ENCODE measurements at regions of chr20 and their contacts with region 1.

Region 1: DNA sequence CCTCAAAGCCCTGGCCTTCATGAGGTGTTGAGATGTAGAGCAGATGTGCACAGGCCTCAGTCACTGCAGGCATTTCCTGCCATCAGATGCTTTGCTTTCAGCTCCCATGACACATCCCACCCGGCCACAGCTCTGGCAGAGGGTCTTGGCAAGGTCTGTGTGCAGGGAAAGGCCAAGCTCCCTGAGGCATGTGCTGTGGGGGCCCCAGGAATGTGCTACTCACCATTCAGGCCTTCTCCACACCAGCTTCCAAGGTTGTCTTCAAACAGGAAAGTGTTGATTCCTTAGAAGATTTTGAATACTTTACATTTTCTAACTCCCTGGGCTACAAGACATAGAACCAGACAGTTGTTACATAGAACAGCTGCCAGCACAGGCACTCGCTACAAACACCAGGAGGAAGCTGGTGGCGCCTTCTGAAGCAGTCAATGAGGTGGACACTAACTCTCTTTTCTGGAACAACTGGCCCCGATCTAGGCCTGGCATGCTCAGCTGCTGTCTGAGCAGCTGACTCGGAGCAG is 27.8 kb downstream of the CASS4 start:
- DNase-seq: no peak
- ATAC-seq: peak; percentile 21
- H3K4me3 ChIP-seq: no peak overlapping the region
- H3K4me3 Mint-ChIP-seq: peak overlapping the region in 9 of 10 donors; percentile 64 to 82 (median 74)
- H3K27ac ChIP-seq: peak overlapping the region; percentile 59
- H3K27ac Mint-ChIP-seq: peak overlapping the region; percentile 81 to 95 (median 91)
- H3K4me1 ChIP-seq: peaks cover 36 to 43% of the 10 kb centered on the region in 2 donors
- H3K4me1 Mint-ChIP-seq: peaks cover 29 to 70% (median 51%) of the 10 kb centered on the region in 7 donors
- H3K27me3 ChIP-seq: no peaks in the 10 kb centered on the region
- H3K27me3 Mint-ChIP-seq: no peaks in the 10 kb centered on the region

Region 2: GRCh38 chr20:56422076-56422823 is 17.6 kb before region 1 on chr20:
- CTCF ChIA-PET with region 1: interaction called, 3 read pairs
- POLR2A ChIA-PET with region 1: interaction called, 7 read pairs
- intact Hi-C with region 1: loop called in 1 of 2 experiments (anchors 2 kb)
- DNase-seq: no peak
- ATAC-seq: no peak
- H3K4me3 ChIP-seq: no peak overlapping the region
- H3K4me3 Mint-ChIP-seq: peak overlapping the region; percentile 11 to 78 (median 58)
- H3K27ac ChIP-seq: peak overlapping the region; percentile 36
- H3K27ac Mint-ChIP-seq: peak overlapping the region; percentile 50 to 98 (median 92)
- H3K4me1 ChIP-seq: peaks cover 33 to 58% of the 10 kb centered on the region in 2 donors
- H3K4me1 Mint-ChIP-seq: peaks cover 41 to 84% (median 64%) of the 10 kb centered on the region in 7 donors
- H3K27me3 ChIP-seq: no peaks in the 10 kb centered on the region
- H3K27me3 Mint-ChIP-seq: no peaks in the 10 kb centered on the region

Region 3: DNA sequence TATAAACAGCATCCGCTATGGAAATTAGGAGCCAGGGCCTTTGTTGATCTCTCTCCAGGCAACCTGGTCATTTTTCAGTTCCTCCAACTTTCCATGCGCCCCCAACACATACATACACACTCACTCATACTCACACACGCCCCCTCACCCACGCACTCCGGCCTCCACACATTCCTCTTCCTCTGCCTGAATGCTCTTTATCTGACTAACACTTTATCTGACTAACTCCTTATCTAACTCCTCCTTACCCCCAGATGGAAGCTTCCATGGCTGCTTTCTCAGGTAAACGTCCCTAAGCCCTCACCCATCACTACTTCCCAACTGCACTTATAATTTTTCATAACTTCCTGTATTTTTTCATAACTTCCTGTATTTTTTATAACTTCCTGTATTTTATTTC is 10.3 kb before region 1 on chr20:
- CTCF ChIA-PET with region 1: interaction called, 3 read pairs
- POLR2A ChIA-PET with region 1: interaction called, 7 read pairs
- intact Hi-C with region 1: loop called in 1 of 2 experiments (anchors 1 kb)
- DNase-seq: peak in 1 of 9 donors; percentile 53
- ATAC-seq: no peak
- H3K4me3 ChIP-seq: peak overlapping the region; percentile 54
- H3K4me3 Mint-ChIP-seq: peak overlapping the region; percentile 77 to 96 (median 88)
- H3K27ac ChIP-seq: peak overlapping the region; percentile 76
- H3K27ac Mint-ChIP-seq: peak overlapping the region; percentile 84 to 99 (median 94)
- H3K4me1 ChIP-seq: peaks cover 22 to 26% of the 10 kb centered on the region in 2 donors
- H3K4me1 Mint-ChIP-seq: peaks cover 39 to 89% (median 75%) of the 10 kb centered on the region in 7 donors
- H3K27me3 ChIP-seq: no peaks in the 10 kb centered on the region
- H3K27me3 Mint-ChIP-seq: no peaks in the 10 kb centered on the region

Region 4: GRCh38 chr20:56460459-56460858 is 20.6 kb after region 1 on chr20:
- CTCF ChIA-PET with region 1: no interaction called
- POLR2A ChIA-PET with region 1: no interaction called
- intact Hi-C with region 1: loop called in 1 of 2 experiments (anchors 2 kb)
- DNase-seq: peak in 6 of 9 donors; percentile 26 to 67 (median 56)
- ATAC-seq: peak; percentile 94
- H3K4me3 ChIP-seq: no peak overlapping the region
- H3K4me3 Mint-ChIP-seq: peak overlapping the region in 2 of 10 donors; percentile 38 to 44
- H3K27ac ChIP-seq: peak overlapping the region; percentile 62
- H3K27ac Mint-ChIP-seq: peak overlapping the region; percentile 34 to 92 (median 85)
- H3K4me1 ChIP-seq: peaks cover 9 to 38% of the 10 kb centered on the region in 2 donors
- H3K4me1 Mint-ChIP-seq: peaks cover 19 to 47% (median 33%) of the 10 kb centered on the region in 7 donors
- H3K27me3 ChIP-seq: no peaks in the 10 kb centered on the region
- H3K27me3 Mint-ChIP-seq: no peaks in the 10 kb centered on the region